GM18951 (cell line): ENCODE measurements at regions of chr1 and their contacts with region 1.

Region 1: DNA sequence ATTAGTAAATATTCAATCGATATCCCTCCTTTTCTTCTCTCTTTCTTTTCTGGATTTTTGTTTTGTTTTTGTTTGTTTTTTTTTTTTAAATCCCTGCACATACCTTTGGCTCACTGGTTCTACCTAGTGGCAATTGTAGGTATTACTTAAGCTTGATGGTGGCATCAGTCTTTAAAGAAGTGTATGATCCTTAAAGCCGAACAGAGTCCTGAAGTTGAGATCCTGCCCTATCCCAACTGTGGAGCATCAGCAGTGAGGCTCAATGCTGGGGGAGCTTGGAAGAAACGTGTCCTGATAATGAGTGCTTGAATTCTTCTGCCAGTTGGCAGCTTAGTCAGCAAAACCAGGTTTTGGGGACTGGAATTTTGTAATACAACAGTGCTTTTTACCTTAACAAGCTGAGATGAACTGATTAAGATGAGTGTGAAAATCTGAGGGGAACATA is 60.8 kb downstream of the FASLG start:
- POLR2A ChIP-seq: no peak

Region 2: DNA sequence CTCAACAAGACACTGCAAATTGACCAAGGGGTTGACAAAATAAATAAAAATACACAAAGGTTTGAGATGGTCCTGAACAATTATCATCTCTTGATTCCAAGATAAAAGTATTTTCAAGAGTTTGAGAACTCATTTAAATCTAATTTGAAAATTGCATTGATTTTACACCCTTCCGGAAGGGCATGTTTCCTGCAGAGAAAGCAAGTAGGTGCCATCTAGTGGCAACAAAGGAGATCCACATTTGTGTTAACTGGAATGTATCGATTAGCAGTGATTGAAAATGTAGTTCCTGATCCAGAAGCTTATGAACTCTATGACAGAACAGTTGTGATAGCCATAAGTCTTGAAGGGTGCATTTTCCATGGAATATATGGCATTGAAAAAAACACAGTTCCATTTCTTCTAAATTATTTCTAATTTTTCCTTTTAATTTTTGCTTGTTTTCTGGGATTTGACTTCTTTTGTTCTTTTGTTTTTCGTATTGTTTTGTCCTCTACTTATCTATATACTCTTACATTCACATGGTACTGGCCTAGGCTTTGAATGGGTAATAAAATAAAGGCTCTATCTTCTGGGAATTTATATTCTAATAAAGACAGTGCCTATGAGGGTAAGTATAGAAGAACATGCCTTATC is 734.7 kb before region 1 on chr1:
- in situ Hi-C with region 1: loop called (anchors 25 kb)
- POLR2A ChIP-seq: no peak

Region 3: DNA sequence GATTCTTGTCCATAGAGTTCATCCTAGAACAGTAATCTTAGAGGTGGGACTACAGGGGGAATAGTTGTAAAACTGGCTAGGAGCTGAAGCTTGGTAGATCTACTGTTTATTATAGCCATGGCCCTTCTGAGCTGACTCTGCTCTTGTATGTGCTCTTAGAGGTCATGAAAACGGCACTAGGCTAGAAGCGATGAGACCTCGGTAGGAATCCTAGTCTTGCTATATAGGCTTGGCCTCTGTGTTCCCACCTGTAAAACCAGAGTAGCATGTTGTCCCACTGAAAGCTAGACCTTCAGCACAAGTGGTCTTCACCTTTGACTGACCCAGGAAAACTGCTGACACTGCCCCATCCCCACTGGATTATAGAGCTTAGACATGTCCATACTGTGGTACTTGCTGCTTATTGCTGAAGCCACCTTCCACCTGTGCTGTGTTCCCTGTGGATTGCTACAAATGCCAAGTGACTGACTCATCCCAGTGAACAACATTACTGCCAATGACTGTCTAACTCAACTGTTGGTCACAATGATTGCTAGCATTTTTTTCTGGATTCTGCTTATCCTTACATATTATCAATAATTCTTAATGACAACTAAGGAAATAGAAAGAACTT is 252.8 kb before region 1 on chr1:
- in situ Hi-C with region 1: loop called (anchors 10 kb)
- POLR2A ChIP-seq: no peak

Region 4: GRCh38 chr1:172497230-172497629 is 222.5 kb before region 1 on chr1:
- in situ Hi-C with region 1: no loop called
- POLR2A ChIP-seq: no peak

Region 5: DNA sequence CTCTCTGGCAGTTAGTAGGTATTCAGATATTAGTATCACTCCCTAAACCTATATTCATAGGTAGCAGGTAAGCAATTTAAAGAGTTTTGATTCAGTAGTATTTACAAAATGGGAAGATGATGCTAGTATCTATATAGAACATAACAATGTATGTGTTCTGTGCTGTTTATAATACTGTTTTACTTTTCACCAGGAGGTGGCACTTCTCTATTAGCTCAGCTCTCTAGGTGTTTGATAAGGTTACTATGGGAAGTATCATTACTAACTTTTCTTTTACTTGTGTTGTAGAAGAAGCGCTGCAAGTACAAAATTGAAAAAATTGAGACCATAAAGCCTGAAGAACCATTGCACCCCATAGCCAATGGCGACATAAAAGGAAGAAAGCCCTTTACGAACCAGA is 110.2 kb before region 1 on chr1:
- in situ Hi-C with region 1: loop called (anchors 25 kb)
- POLR2A ChIP-seq: no peak